Ovary (tissue), 10 donors: ENCODE measurements at regions of chr15 and their contacts with region 1.

Region 1: DNA sequence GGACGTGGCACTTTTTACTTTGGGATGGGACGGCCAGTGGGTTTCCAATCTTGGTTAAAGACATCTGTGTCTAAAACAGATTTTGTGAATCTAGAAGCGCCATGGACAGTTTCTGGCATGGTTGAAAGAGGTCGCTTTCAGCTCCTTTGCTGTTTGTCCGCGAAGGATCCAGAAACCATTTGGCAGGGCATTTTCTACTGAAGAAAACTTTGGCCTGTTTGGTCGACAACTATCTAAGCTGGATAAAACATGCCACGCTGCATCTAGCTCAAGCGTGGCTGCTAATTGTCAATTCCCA is 730 bp upstream of the RORA start:
- DNase-seq: no peak
- H3K4me3 ChIP-seq: peak overlapping the region; percentile 72
- H3K27ac ChIP-seq: no peak overlapping the region
- H3K4me1 ChIP-seq: no peaks in the 10 kb centered on the region
- H3K27me3 ChIP-seq: no peaks in the 10 kb centered on the region
- CTCF ChIP-seq: no peak
- EP300 ChIP-seq: no peak
- POLR2A ChIP-seq: no peak

Region 2: DNA sequence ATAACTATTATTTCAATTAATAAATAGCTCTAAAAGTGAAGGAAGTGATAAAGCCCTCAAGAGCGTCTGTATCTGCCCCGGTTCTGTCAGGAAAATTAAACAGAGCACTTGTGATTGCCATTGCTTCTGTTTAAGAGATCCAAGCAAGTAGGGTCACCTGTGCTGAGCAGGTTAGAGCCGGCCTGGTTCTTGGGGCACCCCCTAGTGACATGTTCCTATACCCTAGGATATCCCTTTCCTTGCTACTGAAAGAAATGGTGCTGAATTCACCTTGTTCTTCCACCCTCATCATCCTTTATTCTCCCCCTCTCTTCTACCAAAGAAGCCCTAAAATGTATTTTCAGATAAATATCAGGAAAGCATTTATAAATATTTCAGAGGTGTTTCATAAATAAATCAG is 324.2 kb before region 1 on chr15:
- intact Hi-C with region 1: no loop called
- DNase-seq: no peak
- H3K4me3 ChIP-seq: no peak overlapping the region
- H3K27ac ChIP-seq: no peak overlapping the region
- H3K4me1 ChIP-seq: peaks cover 12% of the 10 kb centered on the region
- H3K27me3 ChIP-seq: no peaks in the 10 kb centered on the region
- CTCF ChIP-seq: no peak
- EP300 ChIP-seq: no peak
- POLR2A ChIP-seq: no peak

Region 3: DNA sequence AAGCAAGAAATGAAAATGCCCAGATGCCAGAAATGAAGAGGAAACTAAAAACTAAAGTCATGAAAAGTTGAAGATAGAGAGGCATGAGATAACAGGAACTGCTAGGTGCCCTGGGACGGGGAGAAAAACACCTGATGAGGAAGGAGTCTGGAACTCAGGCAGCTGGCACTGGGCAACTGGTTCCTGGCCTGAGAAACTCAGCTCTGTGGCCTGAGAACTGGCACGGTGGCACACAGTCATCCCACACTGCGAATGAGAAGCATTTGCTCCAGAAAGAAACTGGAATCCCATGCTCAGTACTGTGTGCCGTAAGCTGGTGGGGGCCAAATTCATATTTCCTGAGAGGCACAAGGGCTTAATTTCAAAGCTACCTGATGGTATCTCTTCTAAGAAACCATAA is 52.8 kb after region 1 on chr15:
- intact Hi-C with region 1: no loop called
- DNase-seq: no peak
- H3K4me3 ChIP-seq: no peak overlapping the region
- H3K27ac ChIP-seq: no peak overlapping the region
- H3K4me1 ChIP-seq: no peaks in the 10 kb centered on the region
- H3K27me3 ChIP-seq: no peaks in the 10 kb centered on the region
- CTCF ChIP-seq: no peak
- EP300 ChIP-seq: no peak
- POLR2A ChIP-seq: no peak

Region 4: GRCh38 chr15:61299075-61299763 is 69.4 kb after region 1 on chr15:
- intact Hi-C with region 1: loop called in 1 of 4 experiments (anchors 10 kb)
- DNase-seq: peak in 1 of 5 donors; percentile 17
- H3K4me3 ChIP-seq: no peak overlapping the region
- H3K27ac ChIP-seq: no peak overlapping the region
- H3K4me1 ChIP-seq: no peaks in the 10 kb centered on the region
- H3K27me3 ChIP-seq: no peaks in the 10 kb centered on the region
- CTCF ChIP-seq: no peak
- EP300 ChIP-seq: no peak
- POLR2A ChIP-seq: no peak